ENCODE measurements at regions of chr1 and their contacts with region 1.

Region 1: GRCh38 chr1:66242646-66243547 is 291.1 kb upstream of the SGIP1 start:
- DNase-seq: peak; percentile 61
- H3K4me3 Mint-ChIP-seq: no peak overlapping the region
- H3K27ac Mint-ChIP-seq: no peak overlapping the region
- H3K4me1 Mint-ChIP-seq: peaks cover 27% of the 10 kb centered on the region
- H3K27me3 Mint-ChIP-seq: peaks cover 12% of the 10 kb centered on the region

Region 2: GRCh38 chr1:65235867-65236805 is 1006.8 kb before region 1 on chr1:
- intact Hi-C with region 1: loop called (anchors 10 kb)
- DNase-seq: no peak
- H3K4me3 Mint-ChIP-seq: no peak overlapping the region
- H3K27ac Mint-ChIP-seq: no peak overlapping the region
- H3K4me1 Mint-ChIP-seq: peaks cover 17% of the 10 kb centered on the region
- H3K27me3 Mint-ChIP-seq: peaks cover 17% of the 10 kb centered on the region

Region 3: DNA sequence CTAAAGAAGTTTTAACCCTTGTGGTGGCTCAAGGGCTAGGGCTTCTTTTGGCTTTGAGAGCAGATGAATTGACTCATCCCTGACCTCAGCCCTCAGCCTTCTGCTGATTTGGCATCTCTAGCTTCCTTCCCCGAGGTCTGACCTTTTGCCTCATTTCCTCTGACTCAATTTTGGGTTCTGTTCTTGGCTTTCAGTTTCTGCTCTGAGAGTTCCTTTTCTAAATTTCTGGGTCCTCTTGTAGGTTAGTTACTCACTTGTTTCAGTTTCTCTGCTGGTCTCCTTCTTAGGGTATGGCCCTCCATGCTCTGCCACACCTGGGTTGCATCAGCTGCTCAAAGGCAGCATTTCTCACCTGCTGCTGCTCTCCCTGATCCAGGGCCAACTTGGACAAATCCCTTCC is 430.8 kb before region 1 on chr1:
- intact Hi-C with region 1: loop called (anchors 2 kb)
- DNase-seq: peak; percentile 72
- H3K4me3 Mint-ChIP-seq: no peak overlapping the region
- H3K27ac Mint-ChIP-seq: peak overlapping the region; percentile 38
- H3K4me1 Mint-ChIP-seq: peaks cover 35% of the 10 kb centered on the region
- H3K27me3 Mint-ChIP-seq: peaks cover 20% of the 10 kb centered on the region

Region 4: DNA sequence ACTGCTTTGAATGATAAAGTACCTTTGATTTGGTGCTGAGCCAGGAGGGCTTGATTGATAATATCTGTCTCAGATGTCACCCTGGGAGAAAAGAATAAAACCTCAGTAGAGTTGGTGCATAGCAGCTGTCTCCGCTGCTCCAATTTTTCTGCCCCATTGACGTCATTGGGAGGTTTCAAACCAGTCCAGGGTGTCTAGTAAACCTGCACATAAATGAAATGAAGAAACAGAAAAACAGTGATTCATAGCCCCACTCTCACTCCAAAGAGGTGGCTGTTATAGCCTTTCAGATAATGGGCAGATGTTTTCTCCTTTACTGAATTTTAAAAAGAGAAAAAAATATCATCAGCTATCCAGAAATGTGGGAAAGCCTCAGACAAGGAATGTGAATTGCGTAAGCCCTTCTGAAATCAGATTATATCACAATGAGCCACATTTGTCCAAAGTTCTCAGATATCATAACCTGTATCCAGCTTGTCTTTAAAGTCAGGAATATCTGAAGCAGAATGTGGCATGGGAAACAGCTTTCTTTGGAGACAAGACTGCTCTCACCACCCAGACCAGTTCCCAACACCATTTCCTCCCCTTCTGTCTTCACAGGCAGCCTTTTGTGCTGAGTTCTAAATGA is 60.2 kb before region 1 on chr1:
- intact Hi-C with region 1: loop called (anchors 1 kb)
- DNase-seq: peak; percentile 29
- H3K4me3 Mint-ChIP-seq: no peak overlapping the region
- H3K27ac Mint-ChIP-seq: peak overlapping the region; percentile 30
- H3K4me1 Mint-ChIP-seq: peaks cover 32% of the 10 kb centered on the region
- H3K27me3 Mint-ChIP-seq: peaks cover 1% of the 10 kb centered on the region

Region 5: DNA sequence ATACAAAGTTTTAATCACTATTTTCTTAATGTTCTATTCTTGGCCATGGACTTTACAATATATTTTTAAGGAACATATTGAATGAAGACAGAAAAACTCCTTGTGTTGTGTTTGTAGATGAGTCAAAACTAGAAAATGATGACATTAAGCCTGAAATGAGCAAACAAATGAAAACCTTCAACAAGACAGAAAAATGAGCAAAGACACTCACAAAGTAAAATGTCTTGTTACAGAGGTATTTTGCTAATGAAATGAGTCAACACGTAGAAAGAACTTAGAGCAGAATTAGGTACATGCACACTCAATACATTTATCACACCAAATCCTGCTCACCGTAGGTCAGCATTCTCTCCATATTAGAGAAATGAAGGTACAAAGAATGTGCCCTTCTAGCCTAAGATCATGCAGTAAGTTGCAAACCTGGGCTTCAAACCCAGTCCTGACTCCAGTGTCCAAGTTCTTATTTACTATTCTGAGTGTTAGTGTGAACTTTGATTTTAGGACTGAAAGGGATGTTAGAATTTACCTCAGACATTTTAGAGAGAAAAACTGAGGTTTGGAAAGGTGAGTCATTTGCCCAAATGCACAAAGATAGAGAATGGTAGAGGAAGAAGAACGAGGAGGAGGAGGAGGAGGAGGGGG is 157.1 kb after region 1 on chr1:
- intact Hi-C with region 1: loop called (anchors 1 kb)
- DNase-seq: no peak
- H3K4me3 Mint-ChIP-seq: no peak overlapping the region
- H3K27ac Mint-ChIP-seq: peak overlapping the region; percentile 77
- H3K4me1 Mint-ChIP-seq: peaks cover 35% of the 10 kb centered on the region
- H3K27me3 Mint-ChIP-seq: no peaks in the 10 kb centered on the region

Region 6: GRCh38 chr1:66725885-66726665 is 483.2 kb after region 1 on chr1:
- intact Hi-C with region 1: loop called (anchors 5 kb)
- DNase-seq: peak; percentile 36
- H3K4me3 Mint-ChIP-seq: no peak overlapping the region
- H3K27ac Mint-ChIP-seq: no peak overlapping the region
- H3K4me1 Mint-ChIP-seq: peaks cover 33% of the 10 kb centered on the region
- H3K27me3 Mint-ChIP-seq: peaks cover 13% of the 10 kb centered on the region

Measured in activated T-helper 2 cell treated with anti-CD3 and anti-CD28 coated beads, Interferon-gamma antibody, Interleukin-2, Interleukin-4, amounts not matched to agents 10 μg/mL and 5 μg/mL and 100 μg/mL, durations not matched to agents 14 hours and 24 hours and 36 hours (primary cell).